H1 (cell line): ENCODE measurements at regions of chr5 and their contacts with region 1.

Region 1: GRCh38 chr5:36695677-36696673 is 89.6 kb downstream of the SLC1A3 start:
- DNase-seq: peak in 1 of 2 experiments; percentile 77
- H3K4me3 ChIP-seq: no peak overlapping the region
- H3K27ac ChIP-seq: no peak overlapping the region
- H3K4me1 ChIP-seq: peaks cover 0 to 3% (median 0%) of the 10 kb centered on the region in 4 experiments; a peak in 1 of 7 replicates
- H3K27me3 ChIP-seq: peaks cover 3 to 18% (median 13%) of the 10 kb centered on the region in 4 experiments; a peak in 6 of 7 replicates
- CTCF ChIP-seq: peak; percentile 62 to 94 (median 83)
- EP300 ChIP-seq: no peak
- POLR2A ChIP-seq: no peak
- RAD21 ChIP-seq: peak; percentile 87 to 93

Region 2: GRCh38 chr5:36422952-36423351 is 273.0 kb before region 1 on chr5:
- CTCF ChIA-PET with region 1: interaction called, 246 read pairs
- POLR2A ChIA-PET with region 1: no interaction called
- DNase-seq: no peak
- H3K4me3 ChIP-seq: no peak overlapping the region
- H3K27ac ChIP-seq: no peak overlapping the region
- H3K4me1 ChIP-seq: peaks cover 4 to 16% (median 7%) of the 10 kb centered on the region in 4 experiments; a peak in 5 of 7 replicates
- H3K27me3 ChIP-seq: peaks cover 0 to 16% (median 4%) of the 10 kb centered on the region in 4 experiments; a peak in 4 of 7 replicates
- CTCF ChIP-seq: no peak
- EP300 ChIP-seq: no peak
- POLR2A ChIP-seq: no peak
- RAD21 ChIP-seq: no peak

Region 3: DNA sequence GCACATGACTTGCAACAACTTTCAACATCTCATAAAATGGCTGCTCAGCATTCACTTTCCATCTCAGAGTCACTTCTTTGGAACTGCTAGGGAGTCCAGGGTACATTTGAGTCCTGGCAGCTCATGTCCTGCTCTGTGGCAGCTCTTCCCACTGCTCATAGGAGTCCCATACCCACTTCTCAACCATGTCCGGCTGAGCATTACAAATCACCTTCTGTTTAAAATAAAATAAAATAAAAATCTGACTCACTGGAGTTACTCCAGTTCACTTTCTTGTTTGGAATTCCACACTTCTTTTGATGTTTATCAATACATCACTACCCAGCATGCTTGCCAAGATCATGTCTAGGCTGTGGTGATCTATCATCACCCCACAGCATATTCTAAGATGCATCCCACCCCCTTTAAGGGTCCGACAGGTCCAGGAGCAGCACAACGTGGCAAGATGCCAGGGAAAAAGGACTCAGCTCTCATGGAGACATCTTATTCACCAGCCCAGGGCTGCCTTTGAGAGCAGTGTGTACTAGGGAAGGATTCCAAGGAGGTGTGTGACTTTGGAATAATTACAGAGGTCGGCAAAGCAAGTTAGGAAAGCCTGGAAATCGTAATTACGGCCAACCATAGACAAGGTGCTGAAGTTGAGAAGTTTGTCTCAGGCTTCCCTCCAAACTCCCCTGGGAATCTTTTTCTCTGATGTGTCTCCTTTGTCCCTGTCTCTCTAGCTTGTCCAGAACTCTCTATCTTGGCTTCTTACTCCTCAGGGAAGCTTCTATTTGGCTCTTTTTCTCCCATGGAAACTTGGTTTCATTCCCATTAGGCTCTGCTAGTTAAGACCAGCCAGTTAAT is 201.0 kb before region 1 on chr5:
- CTCF ChIA-PET with region 1: interaction called, 10 read pairs
- POLR2A ChIA-PET with region 1: no interaction called
- DNase-seq: no peak
- H3K4me3 ChIP-seq: no peak overlapping the region
- H3K27ac ChIP-seq: no peak overlapping the region
- H3K4me1 ChIP-seq: peaks cover 0 to 2% (median 0%) of the 10 kb centered on the region in 4 experiments; a peak in 2 of 7 replicates
- H3K27me3 ChIP-seq: no peaks in the 10 kb centered on the region
- CTCF ChIP-seq: no peak
- EP300 ChIP-seq: no peak
- POLR2A ChIP-seq: no peak
- RAD21 ChIP-seq: no peak

Region 4: GRCh38 chr5:36590513-36591286 is 105.3 kb before region 1 on chr5:
- CTCF ChIA-PET with region 1: interaction called, 11 read pairs
- POLR2A ChIA-PET with region 1: interaction called, 3 read pairs
- DNase-seq: no peak
- H3K4me3 ChIP-seq: no peak overlapping the region
- H3K27ac ChIP-seq: no peak overlapping the region
- H3K4me1 ChIP-seq: peaks cover 4 to 8% (median 7%) of the 10 kb centered on the region in 4 experiments; a peak in 5 of 7 replicates
- H3K27me3 ChIP-seq: no peaks in the 10 kb centered on the region
- CTCF ChIP-seq: no peak
- EP300 ChIP-seq: no peak
- POLR2A ChIP-seq: no peak
- RAD21 ChIP-seq: no peak

Region 5: DNA sequence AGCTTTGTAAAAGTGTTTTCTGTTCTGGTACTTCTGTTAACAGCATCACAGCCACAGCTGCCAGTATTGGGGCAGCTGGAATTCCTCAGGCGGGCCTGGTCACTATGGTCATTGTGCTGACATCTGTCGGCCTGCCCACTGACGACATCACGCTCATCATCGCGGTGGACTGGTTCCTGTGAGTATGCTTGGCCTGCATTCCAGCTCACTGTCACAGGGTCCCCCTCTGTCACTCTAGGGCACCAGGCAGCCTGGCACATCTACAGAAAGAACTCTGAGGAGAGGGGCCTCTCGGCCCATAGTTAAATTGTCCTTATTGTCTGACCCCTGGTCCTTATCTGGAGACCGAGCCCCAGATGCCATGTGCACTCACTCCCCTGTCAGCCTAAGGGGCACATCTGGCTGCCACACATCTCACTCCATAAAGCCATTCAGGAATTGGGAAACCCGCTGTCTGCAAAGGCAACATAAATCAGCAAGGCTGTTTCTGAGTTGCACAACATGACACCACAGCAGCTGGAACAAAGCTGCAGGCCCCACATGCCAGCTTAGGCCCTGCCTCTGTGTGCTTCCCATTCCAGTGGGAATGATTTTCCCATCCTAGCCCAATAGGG is 12.0 kb before region 1 on chr5:
- CTCF ChIA-PET with region 1: interaction called, 17 read pairs
- POLR2A ChIA-PET with region 1: no interaction called
- DNase-seq: no peak
- H3K4me3 ChIP-seq: no peak overlapping the region
- H3K27ac ChIP-seq: no peak overlapping the region
- H3K4me1 ChIP-seq: no peaks in the 10 kb centered on the region
- H3K27me3 ChIP-seq: no peaks in the 10 kb centered on the region
- CTCF ChIP-seq: no peak
- EP300 ChIP-seq: no peak
- POLR2A ChIP-seq: no peak
- RAD21 ChIP-seq: no peak